ENCODE measurements at regions of chr21 and their contacts with region 1.

Region 1: DNA sequence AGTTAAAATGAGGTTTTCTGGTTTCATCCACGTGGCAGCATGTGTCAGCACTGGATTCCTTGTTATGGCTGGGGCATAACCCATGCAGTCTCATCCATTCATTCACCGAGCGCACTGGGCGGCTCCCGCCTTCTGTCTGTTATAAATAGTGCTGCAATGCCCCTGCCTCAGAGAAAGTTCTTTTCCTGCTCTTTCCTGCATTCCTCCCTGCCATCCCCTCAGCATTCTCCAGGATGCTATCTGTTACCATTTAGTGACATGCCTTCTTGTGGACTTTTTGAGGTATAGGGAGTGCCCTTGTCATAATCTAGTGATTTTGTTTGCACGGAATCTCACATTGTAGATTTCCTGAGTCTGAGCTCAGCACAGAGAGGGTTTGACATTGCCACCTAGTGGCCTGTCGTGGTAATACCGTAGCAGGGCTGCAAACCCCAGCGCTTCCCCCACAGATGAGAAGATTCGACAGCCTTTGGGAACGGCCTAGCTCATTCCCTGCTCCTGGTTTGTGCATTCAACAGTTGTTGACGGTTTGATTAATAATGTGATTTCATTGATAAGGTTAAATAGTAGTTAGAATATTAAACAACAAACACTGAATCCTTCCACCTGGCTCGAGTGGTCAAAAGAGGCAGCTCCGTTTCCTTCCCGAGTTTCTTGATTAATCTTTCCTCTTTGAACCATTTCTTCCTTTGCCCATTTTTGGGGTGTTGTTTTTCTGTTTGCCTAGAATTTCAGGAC is 46.3 kb downstream of the UMODL1 start:
- DNase-seq: peak; percentile 79
- ATAC-seq: peak; percentile 87

Region 2: DNA sequence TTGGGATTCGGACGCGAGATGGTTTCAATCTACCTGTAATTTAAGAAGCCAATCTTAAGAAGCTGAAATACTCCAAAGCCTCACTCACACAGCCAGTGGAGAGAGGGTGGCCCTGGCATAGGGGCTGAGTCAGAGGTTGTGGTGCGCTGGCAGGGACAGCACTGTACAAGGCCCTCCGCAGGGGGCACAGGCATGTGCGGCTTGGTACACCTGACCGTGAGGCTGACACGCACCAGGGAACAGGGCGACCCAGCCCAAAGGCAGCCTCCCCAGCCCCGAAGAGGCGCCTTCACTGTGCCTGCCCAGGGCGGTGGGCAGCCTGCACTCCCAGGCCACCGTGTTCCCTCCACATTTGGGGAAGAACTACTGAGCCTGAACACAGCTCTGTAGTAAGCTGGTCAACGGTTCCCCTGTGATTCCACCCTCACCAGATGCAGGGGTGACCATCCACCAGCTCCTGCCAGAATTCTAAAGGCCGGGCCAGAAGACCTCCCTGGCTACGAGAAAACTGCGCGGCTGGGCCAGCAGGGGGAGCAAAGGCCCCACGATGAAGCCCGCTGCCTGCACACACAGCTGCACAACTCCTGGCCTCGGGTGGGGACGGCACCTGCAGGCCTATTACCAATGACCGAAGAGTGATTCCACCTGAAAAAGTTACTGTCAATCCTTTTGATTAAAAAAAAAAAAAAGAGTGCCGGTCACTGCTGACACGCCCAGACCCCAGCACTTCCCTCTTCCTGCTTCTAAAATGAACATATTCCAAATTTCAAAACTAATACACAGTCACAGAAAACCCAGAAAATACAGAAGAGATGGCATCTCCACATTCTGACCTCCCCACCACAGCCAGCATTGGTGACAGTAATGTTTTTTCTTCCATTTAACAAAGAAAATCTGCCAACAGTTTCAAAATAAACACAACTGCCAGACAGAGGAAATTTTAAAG is 300.9 kb before region 1 on chr21:
- intact Hi-C with region 1: loop called (anchors 2 kb)
- DNase-seq: peak; percentile 76
- ATAC-seq: peak; percentile 91

Region 3: GRCh38 chr21:42009831-42010523 is 107.4 kb before region 1 on chr21 and contains the start of gene ZBTB21:
- intact Hi-C with region 1: loop called (anchors 5 kb)
- DNase-seq: peak; percentile 99
- ATAC-seq: peak; percentile 98
- total RNA-seq, gene ZBTB21: 6.6 TPM

Measured in left ventricle myocardium superior (tissue), 1 donor.